Activated CD8-positive, alpha-beta T cell treated with anti-CD3 and anti-CD28 coated beads for 36 hours (primary cell): ENCODE measurements at regions of chr10 and their contacts with region 1.

Region 1: DNA sequence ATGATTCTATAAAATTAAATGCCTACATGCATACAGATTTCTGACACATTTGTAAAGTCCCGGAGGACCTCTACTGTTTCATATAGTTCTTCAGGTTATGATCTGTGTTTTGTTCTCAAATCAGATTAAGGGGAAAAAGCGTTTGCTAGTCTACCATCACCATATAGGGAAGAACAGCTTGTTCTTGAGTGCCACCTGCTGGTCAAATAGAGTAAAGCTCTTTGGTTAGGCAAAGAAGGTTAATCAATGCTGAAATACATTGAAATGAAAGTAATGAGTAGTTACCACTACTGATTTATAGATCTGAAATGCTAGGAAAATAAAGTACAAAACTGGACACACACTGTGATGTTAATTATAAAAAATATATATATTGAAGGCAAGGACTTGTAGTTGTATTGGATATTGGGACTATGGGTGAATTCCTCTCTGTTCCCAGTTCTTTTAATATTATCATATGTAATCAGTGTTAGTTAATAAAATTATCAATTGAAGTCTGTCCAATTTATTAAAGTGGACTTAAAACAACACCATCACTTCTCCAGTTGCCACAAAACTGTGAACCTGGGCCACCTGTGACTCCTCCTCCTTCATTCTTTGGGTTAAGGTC is 72.6 kb upstream of the PDLIM1 start:
- DNase-seq: peak; percentile 57
- ATAC-seq: peak; percentile 80
- H3K4me3 Mint-ChIP-seq: no peak overlapping the region
- H3K27ac Mint-ChIP-seq: no peak overlapping the region
- H3K4me1 Mint-ChIP-seq: no peaks in the 10 kb centered on the region
- H3K27me3 Mint-ChIP-seq: peaks cover 6% of the 10 kb centered on the region
- CTCF ChIP-seq: peak; percentile 91

Region 2: DNA sequence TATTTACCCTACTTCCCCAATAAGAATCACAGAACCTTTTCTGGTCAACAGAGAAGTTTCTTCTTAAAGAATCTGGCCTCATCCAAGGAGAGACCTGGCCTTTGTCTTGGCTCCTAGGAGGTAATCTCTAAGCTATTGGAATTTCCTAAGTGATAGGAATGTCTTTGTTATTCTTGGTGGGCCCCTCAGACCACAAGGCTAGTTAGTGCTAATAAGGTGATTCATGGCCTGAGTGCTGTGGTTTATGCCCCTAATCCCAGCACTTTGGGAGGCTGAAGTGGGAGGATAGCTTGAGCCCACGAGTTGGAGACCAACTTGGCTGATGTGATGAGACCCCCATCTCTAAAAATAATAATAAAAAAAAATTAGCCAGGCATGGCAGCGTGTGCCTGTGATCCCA is 739.8 kb before region 1 on chr10:
- CTCF ChIA-PET with region 1: interaction called, 3 read pairs
- POLR2A ChIA-PET with region 1: no interaction called
- intact Hi-C with region 1: loop called (anchors 10 kb)
- DNase-seq: no peak
- ATAC-seq: no peak
- H3K4me3 Mint-ChIP-seq: no peak overlapping the region
- H3K27ac Mint-ChIP-seq: no peak overlapping the region
- H3K4me1 Mint-ChIP-seq: no peaks in the 10 kb centered on the region
- H3K27me3 Mint-ChIP-seq: no peaks in the 10 kb centered on the region
- CTCF ChIP-seq: no peak

Region 3: DNA sequence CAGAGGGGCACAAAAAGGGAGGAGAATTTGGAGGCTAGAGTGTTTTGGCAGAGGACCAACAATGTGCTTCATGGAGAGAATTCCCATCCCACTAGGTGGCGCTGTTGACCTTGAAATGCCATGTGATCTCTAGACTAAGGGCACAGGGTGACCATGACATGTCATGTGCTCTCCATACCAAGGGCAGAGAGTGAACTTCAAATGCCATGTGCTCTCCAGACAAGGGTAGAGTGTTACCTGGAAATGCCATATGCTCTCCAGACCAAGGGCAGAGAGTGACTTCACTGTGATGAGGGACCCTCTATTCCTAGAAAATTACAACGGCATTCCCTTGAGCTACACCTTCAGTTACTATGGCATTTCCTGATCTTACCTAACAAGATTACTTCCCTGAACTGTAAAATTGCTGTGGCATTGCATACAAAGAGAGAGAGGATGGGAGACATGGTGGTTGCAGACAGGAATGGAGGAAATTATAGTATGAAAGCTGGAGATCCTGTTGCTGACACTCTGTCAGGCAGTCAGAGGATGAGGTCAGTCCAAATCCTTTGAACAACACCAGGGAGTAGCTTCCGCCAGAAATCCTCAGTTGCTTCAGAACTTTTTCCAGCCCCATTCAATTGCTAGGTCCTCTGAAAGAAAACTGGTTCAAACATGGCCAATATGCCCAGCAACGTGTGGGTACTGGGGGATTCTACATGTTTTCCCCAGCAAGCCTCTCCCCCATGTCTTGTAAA is 230.2 kb before region 1 on chr10:
- CTCF ChIA-PET with region 1: interaction called, 17 read pairs
- POLR2A ChIA-PET with region 1: no interaction called
- intact Hi-C with region 1: loop called (anchors 2 kb)
- DNase-seq: peak; percentile 90
- ATAC-seq: peak; percentile 79
- H3K4me3 Mint-ChIP-seq: no peak overlapping the region
- H3K27ac Mint-ChIP-seq: no peak overlapping the region
- H3K4me1 Mint-ChIP-seq: no peaks in the 10 kb centered on the region
- H3K27me3 Mint-ChIP-seq: no peaks in the 10 kb centered on the region
- CTCF ChIP-seq: peak; percentile 68

Region 4: GRCh38 chr10:95183271-95184230 is 179.9 kb before region 1 on chr10:
- CTCF ChIA-PET with region 1: interaction called, 7 read pairs
- POLR2A ChIA-PET with region 1: no interaction called
- intact Hi-C with region 1: loop called (anchors 5 kb)
- DNase-seq: peak; percentile 78
- ATAC-seq: peak; percentile 94
- H3K4me3 Mint-ChIP-seq: peak overlapping the region; percentile 65
- H3K27ac Mint-ChIP-seq: no peak overlapping the region
- H3K4me1 Mint-ChIP-seq: peaks cover 4% of the 10 kb centered on the region
- H3K27me3 Mint-ChIP-seq: peaks cover 22% of the 10 kb centered on the region
- CTCF ChIP-seq: peak; percentile 91

Region 5: GRCh38 chr10:95336702-95337101 is 26.7 kb before region 1 on chr10:
- CTCF ChIA-PET with region 1: no interaction called
- POLR2A ChIA-PET with region 1: no interaction called
- intact Hi-C with region 1: no loop called
- DNase-seq: no peak
- ATAC-seq: no peak
- H3K4me3 Mint-ChIP-seq: no peak overlapping the region
- H3K27ac Mint-ChIP-seq: no peak overlapping the region
- H3K4me1 Mint-ChIP-seq: no peaks in the 10 kb centered on the region
- H3K27me3 Mint-ChIP-seq: no peaks in the 10 kb centered on the region
- CTCF ChIP-seq: no peak

Region 6: GRCh38 chr10:95350219-95350829 is 13.1 kb before region 1 on chr10:
- CTCF ChIA-PET with region 1: interaction called, 14 read pairs
- POLR2A ChIA-PET with region 1: no interaction called
- intact Hi-C with region 1: no loop called
- DNase-seq: no peak
- ATAC-seq: no peak
- H3K4me3 Mint-ChIP-seq: no peak overlapping the region
- H3K27ac Mint-ChIP-seq: no peak overlapping the region
- H3K4me1 Mint-ChIP-seq: no peaks in the 10 kb centered on the region
- H3K27me3 Mint-ChIP-seq: no peaks in the 10 kb centered on the region
- CTCF ChIP-seq: no peak

Region 7: GRCh38 chr10:95445837-95446486 is 82.6 kb after region 1 on chr10:
- CTCF ChIA-PET with region 1: no interaction called
- POLR2A ChIA-PET with region 1: no interaction called
- intact Hi-C with region 1: no loop called
- DNase-seq: peak; percentile 44
- ATAC-seq: peak; percentile 72
- H3K4me3 Mint-ChIP-seq: no peak overlapping the region
- H3K27ac Mint-ChIP-seq: no peak overlapping the region
- H3K4me1 Mint-ChIP-seq: peaks cover 4% of the 10 kb centered on the region
- H3K27me3 Mint-ChIP-seq: peaks cover 5% of the 10 kb centered on the region
- CTCF ChIP-seq: peak; percentile 89